Natural killer cell (primary cell): ENCODE measurements at regions of chr11 and their contacts with region 1.

Region 1: GRCh38 chr11:95835768-95836488 is 45.6 kb downstream of the CEP57 start:
- DNase-seq: peak in 1 of 2 donors; percentile 75
- ATAC-seq: peak; percentile 87 to 95 (median 92)
- H3K4me3 ChIP-seq: no peak overlapping the region
- H3K4me3 Mint-ChIP-seq: no peak overlapping the region
- H3K27ac ChIP-seq: no peak overlapping the region
- H3K27ac Mint-ChIP-seq: peak overlapping the region; percentile 23 to 35
- H3K4me1 ChIP-seq: no peaks in the 10 kb centered on the region
- H3K4me1 Mint-ChIP-seq: peaks cover 0 to 7% of the 10 kb centered on the region in 2 donors
- H3K27me3 ChIP-seq: no peaks in the 10 kb centered on the region
- H3K27me3 Mint-ChIP-seq: no peaks in the 10 kb centered on the region
- CTCF ChIP-seq: peak; percentile 79

Region 2: GRCh38 chr11:95487391-95487790 is 348.5 kb before region 1 on chr11:
- intact Hi-C with region 1: no loop called
- DNase-seq: no peak
- ATAC-seq: no peak
- H3K4me3 ChIP-seq: no peak overlapping the region
- H3K4me3 Mint-ChIP-seq: no peak overlapping the region
- H3K27ac ChIP-seq: no peak overlapping the region
- H3K27ac Mint-ChIP-seq: no peak overlapping the region
- H3K4me1 ChIP-seq: no peaks in the 10 kb centered on the region
- H3K4me1 Mint-ChIP-seq: no peaks in the 10 kb centered on the region
- H3K27me3 ChIP-seq: no peaks in the 10 kb centered on the region
- H3K27me3 Mint-ChIP-seq: peaks cover 0 to 7% of the 10 kb centered on the region in 2 donors
- CTCF ChIP-seq: no peak

Region 3: GRCh38 chr11:96389720-96390487 is 554.0 kb after region 1 on chr11 and contains the starts of genes CCDC82 and JRKL:
- intact Hi-C with region 1: loop called (anchors 2 kb)
- DNase-seq: peak; percentile 97
- ATAC-seq: peak; percentile 96 to 99 (median 97)
- H3K4me3 ChIP-seq: peak within 1 kb of the TSS; percentile 82
- H3K4me3 Mint-ChIP-seq: peak within 1 kb of the TSS; percentile 95
- H3K27ac ChIP-seq: peak within 1 kb of the TSS; percentile 89
- H3K27ac Mint-ChIP-seq: peak within 1 kb of the TSS; percentile 75 to 95
- H3K4me1 ChIP-seq: peaks cover 8% of the 10 kb centered on the region
- H3K4me1 Mint-ChIP-seq: peaks cover 35 to 54% of the 10 kb centered on the region in 2 donors
- H3K27me3 ChIP-seq: no peaks in the 10 kb centered on the region
- H3K27me3 Mint-ChIP-seq: no peaks in the 10 kb centered on the region
- CTCF ChIP-seq: no peak
- total RNA-seq, gene CCDC82: 36.2 to 42.1 (median 38.0) TPM
- total RNA-seq, gene JRKL: 4.5 to 6.1 (median 5.5) TPM

Region 4: GRCh38 chr11:96424693-96425092 is 588.8 kb after region 1 on chr11:
- intact Hi-C with region 1: loop called (anchors 2 kb)
- DNase-seq: no peak
- ATAC-seq: no peak
- H3K4me3 ChIP-seq: no peak overlapping the region
- H3K4me3 Mint-ChIP-seq: no peak overlapping the region
- H3K27ac ChIP-seq: no peak overlapping the region
- H3K27ac Mint-ChIP-seq: no peak overlapping the region
- H3K4me1 ChIP-seq: no peaks in the 10 kb centered on the region
- H3K4me1 Mint-ChIP-seq: no peaks in the 10 kb centered on the region
- H3K27me3 ChIP-seq: peaks cover 13% of the 10 kb centered on the region
- H3K27me3 Mint-ChIP-seq: peaks cover 27 to 60% of the 10 kb centered on the region in 2 donors
- CTCF ChIP-seq: no peak